Heart right ventricle (tissue), 16 donors: ENCODE measurements at regions of chr1 and their contacts with region 1.

Region 1: GRCh38 chr1:105544475-105544874 is 1512.0 kb upstream of the PRMT6 start:
- DNase-seq: no peak
- ATAC-seq: no peak
- H3K4me3 ChIP-seq: no peak overlapping the region
- H3K27ac ChIP-seq: no peak overlapping the region
- H3K4me1 ChIP-seq: no peaks in the 10 kb centered on the region
- H3K27me3 ChIP-seq: no peaks in the 10 kb centered on the region
- CTCF ChIP-seq: no peak

Region 2: GRCh38 chr1:105231378-105231777 is 313.1 kb before region 1 on chr1:
- intact Hi-C with region 1: no loop called
- DNase-seq: no peak
- ATAC-seq: no peak
- H3K4me3 ChIP-seq: no peak overlapping the region
- H3K27ac ChIP-seq: no peak overlapping the region
- H3K4me1 ChIP-seq: no peaks in the 10 kb centered on the region
- H3K27me3 ChIP-seq: no peaks in the 10 kb centered on the region
- CTCF ChIP-seq: no peak

Region 3: GRCh38 chr1:105700728-105701127 is 156.3 kb after region 1 on chr1:
- intact Hi-C with region 1: loop called in 1 of 10 experiments (anchors 5 kb)
- DNase-seq: no peak
- ATAC-seq: no peak
- H3K4me3 ChIP-seq: no peak overlapping the region
- H3K27ac ChIP-seq: no peak overlapping the region
- H3K4me1 ChIP-seq: no peaks in the 10 kb centered on the region
- H3K27me3 ChIP-seq: no peaks in the 10 kb centered on the region
- CTCF ChIP-seq: no peak